Activated naive CD8-positive, alpha-beta T cell treated with anti-CD3 and anti-CD28 coated beads, Interleukin-2, amount 10 ng/mL, durations not matched to agents 7 days and 5 days (primary cell): ENCODE measurements at regions of chr17 and their contacts with region 1.

Region 1: GRCh38 chr17:781805-782731 is at the starts of genes GLOD4 and MRM3:
- DNase-seq: peak; percentile 99
- ATAC-seq: peak; percentile 97
- H3K4me3 Mint-ChIP-seq: peak within 1 kb of the TSS; percentile 95
- H3K27ac Mint-ChIP-seq: peak within 1 kb of the TSS; percentile 96
- H3K4me1 Mint-ChIP-seq: peaks cover 22% of the 10 kb centered on the region
- H3K27me3 Mint-ChIP-seq: no peaks in the 10 kb centered on the region
- total RNA-seq, gene GLOD4: 57.8 to 64.8 TPM
- total RNA-seq, gene MRM3: 18.3 to 21.5 TPM

Region 2: GRCh38 chr17:752002-752619 is 30.0 kb before region 1 on chr17 and contains the start of gene GEMIN4:
- POLR2A ChIA-PET with region 1: interaction called, 12 read pairs
- DNase-seq: peak; percentile 100
- ATAC-seq: peak; percentile 88
- H3K4me3 Mint-ChIP-seq: peak within 1 kb of the TSS; percentile 98
- H3K27ac Mint-ChIP-seq: peak within 1 kb of the TSS; percentile 97
- H3K4me1 Mint-ChIP-seq: peaks cover 25% of the 10 kb centered on the region
- H3K27me3 Mint-ChIP-seq: no peaks in the 10 kb centered on the region
- total RNA-seq, gene GEMIN4: 29.4 to 30.2 TPM

Region 3: GRCh38 chr17:979538-980405 is 197.7 kb after region 1 on chr17 and contains the start of gene NXN:
- POLR2A ChIA-PET with region 1: interaction called, 20 read pairs
- DNase-seq: peak; percentile 95
- ATAC-seq: peak; percentile 82
- H3K4me3 Mint-ChIP-seq: peak within 1 kb of the TSS; percentile 83
- H3K27ac Mint-ChIP-seq: no peak within 1 kb of the TSS
- H3K4me1 Mint-ChIP-seq: peaks cover 10% of the 10 kb centered on the region
- H3K27me3 Mint-ChIP-seq: peaks cover 28% of the 10 kb centered on the region
- total RNA-seq, gene NXN: 0.22 to 0.37 TPM